Activated T-helper 1 cell treated with anti-CD3 and anti-CD28 coated beads, Interleukin-12 subunit alpha, Interleukin-12 subunit beta, Interleukin-2, Interleukin-4 antibody, amounts not matched to agents 30 ng/mL and 10 ng/mL and 1 ng/mL, durations not matched to agents 14 hours and 24 hours and 36 hours (primary cell): ENCODE measurements at regions of chr9 and their contacts with region 1.

Region 1: DNA sequence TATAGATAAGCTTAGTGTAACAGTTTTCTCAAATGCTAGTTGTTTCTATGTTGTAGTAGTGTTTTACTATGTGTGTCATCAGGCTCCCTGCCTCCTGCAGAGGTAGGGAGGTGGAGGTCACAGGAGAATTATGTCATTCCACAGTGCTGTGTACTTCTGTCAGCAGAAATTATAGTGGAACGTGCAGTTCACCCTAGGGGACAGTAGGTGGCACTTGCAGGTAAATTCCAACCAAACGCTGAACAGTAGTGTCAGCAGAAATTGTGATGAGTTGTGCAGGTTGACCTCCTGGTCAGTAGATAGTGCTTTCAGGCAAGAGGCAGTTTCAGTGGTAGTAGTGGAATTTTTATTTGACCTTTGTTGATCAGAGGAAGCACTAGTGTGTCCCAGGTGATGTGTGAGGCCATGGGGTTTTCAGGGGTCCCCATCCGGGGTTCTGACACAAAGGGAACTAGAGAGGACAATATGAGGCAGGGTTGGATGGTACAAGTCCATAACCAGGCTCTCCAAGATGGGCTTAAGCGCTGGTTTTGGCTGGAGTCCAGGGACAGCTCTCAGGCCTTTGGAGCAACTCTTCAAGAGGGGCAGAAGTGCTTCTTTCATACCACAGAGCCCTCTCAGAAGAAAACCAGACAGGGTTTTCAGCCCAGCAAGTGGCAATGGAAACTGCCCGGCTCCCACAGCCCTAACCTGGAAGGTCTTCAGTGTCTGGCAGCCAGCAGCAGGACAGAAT is 402.9 kb downstream of the CYLC2 start:
- DNase-seq: no peak
- H3K4me3 Mint-ChIP-seq: no peak overlapping the region
- H3K27ac Mint-ChIP-seq: no peak overlapping the region
- H3K4me1 Mint-ChIP-seq: no peaks in the 10 kb centered on the region
- H3K27me3 Mint-ChIP-seq: no peaks in the 10 kb centered on the region

Region 2: GRCh38 chr9:103296189-103296588 is 101.8 kb before region 1 on chr9:
- intact Hi-C with region 1: no loop called
- DNase-seq: no peak
- H3K4me3 Mint-ChIP-seq: no peak overlapping the region
- H3K27ac Mint-ChIP-seq: no peak overlapping the region
- H3K4me1 Mint-ChIP-seq: no peaks in the 10 kb centered on the region
- H3K27me3 Mint-ChIP-seq: no peaks in the 10 kb centered on the region

Region 3: DNA sequence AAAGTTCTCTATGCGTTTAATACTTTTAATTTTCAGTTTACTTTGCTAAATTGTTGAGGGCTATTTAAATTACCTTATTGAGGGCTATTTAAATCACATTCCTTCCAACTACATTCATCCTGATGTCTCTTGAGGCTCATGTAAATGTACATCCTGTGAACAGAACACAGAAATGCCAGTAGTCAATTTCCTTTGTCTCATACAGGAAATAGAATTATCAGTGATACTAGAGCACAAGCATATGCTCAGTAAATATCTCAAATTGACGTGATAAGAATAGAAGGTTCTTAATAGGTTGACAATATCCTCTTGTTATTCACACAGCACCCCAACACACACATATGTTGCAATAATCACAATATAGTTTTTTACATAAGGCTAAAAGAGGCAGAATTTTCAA is 46.1 kb after region 1 on chr9:
- intact Hi-C with region 1: no loop called
- DNase-seq: no peak
- H3K4me3 Mint-ChIP-seq: no peak overlapping the region
- H3K27ac Mint-ChIP-seq: no peak overlapping the region
- H3K4me1 Mint-ChIP-seq: no peaks in the 10 kb centered on the region
- H3K27me3 Mint-ChIP-seq: no peaks in the 10 kb centered on the region

Region 4: DNA sequence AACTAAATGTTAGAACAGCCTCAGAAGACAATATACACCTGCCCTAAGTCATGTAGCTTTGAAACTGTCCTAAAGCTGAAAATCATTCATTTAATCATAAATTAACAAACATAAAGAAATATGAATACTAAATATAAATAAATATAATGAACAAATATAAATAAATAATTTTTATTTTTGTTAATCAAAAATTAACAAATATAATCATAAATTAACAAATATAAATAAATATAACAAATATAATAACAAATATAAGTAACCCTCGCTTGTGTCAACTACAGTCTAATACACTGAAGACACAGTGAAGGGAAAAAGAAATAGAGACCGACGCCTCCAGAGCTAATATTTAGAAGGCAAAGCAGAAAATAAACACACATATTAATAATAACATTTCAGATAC is 124.4 kb after region 1 on chr9:
- intact Hi-C with region 1: no loop called
- DNase-seq: no peak
- H3K4me3 Mint-ChIP-seq: no peak overlapping the region
- H3K27ac Mint-ChIP-seq: no peak overlapping the region
- H3K4me1 Mint-ChIP-seq: no peaks in the 10 kb centered on the region
- H3K27me3 Mint-ChIP-seq: no peaks in the 10 kb centered on the region

Region 5: DNA sequence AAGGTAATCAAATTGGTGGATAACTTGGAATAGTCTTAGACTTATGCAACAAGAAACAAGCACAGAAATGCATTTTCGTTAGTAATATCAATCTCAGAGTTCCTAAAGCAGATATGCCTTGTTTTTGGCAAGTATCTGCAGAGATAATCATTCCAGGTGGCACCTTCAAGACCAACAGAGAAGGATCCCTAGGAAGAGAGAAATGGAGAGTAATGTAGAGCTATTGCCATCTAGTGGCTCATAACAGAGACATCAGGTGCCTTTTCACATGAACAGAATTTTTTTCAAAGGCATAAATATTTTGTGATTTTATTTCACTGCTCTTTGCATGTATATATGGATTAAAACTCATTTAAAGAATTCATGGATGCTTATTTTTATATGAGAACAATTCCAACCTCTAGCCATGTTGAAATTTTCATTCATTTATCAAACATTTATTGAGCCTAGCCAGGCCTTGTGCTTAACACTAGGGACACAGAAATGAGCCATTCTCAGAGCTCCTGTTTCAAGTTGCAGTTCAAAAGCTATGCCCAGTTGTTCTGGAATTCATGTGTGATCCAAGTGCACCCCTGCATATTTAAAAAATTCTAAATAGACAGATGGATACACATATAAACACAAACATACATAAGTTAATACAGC is 988.5 kb after region 1 on chr9:
- intact Hi-C with region 1: loop called (anchors 5 kb)
- DNase-seq: no peak
- H3K4me3 Mint-ChIP-seq: no peak overlapping the region
- H3K27ac Mint-ChIP-seq: no peak overlapping the region
- H3K4me1 Mint-ChIP-seq: no peaks in the 10 kb centered on the region
- H3K27me3 Mint-ChIP-seq: no peaks in the 10 kb centered on the region

Region 6: DNA sequence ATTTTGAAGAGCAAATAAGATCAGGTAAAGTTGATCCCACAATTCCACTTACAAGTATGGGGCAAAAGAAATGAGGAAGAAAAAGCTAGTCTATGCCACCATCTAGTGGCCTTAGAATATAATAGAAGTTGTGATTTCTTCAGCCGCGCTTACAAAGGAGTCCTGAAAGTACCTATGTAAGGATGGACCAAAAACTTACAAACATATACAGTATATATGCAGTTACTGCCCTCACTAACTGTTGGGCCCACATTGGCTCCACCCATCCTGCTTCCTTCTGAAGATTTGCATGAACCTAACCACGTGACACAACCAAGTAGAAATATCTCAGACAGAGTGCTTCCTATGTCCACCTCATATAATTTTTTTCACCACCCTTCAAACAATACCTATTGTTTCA is 1284.6 kb after region 1 on chr9:
- intact Hi-C with region 1: loop called (anchors 5 kb)
- DNase-seq: no peak
- H3K4me3 Mint-ChIP-seq: no peak overlapping the region
- H3K27ac Mint-ChIP-seq: no peak overlapping the region
- H3K4me1 Mint-ChIP-seq: peaks cover 5% of the 10 kb centered on the region
- H3K27me3 Mint-ChIP-seq: no peaks in the 10 kb centered on the region